ENCODE measurements at regions of chr21 and their contacts with region 1.

Region 1: DNA sequence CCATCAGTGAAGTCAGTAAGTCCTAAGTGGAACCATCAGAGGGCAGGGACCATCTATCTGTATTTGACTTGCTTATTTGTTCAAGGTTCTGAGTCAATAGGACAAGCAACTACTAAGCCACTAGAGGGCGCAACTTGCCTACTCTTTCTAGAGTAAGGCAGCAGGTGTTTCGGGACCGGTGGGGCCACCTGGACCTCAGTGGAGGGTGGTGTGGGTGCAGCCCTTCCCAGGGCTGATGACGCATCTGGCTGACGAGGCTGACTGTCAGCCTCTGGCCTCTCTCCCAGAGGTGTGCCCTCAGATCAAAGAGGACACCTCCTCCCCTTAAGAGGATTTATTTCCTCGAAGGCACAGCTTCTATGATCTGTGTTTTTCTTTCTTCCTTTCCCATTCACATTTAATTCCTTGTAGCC is 6.6 kb downstream of the CBR3 start:
- DNase-seq: peak in 41 of 42 donors; percentile 28 to 94 (median 82)

Region 2: GRCh38 chr21:36209626-36210171 is 68.2 kb after region 1 on chr21:
- intact Hi-C with region 1: loop called (anchors 10 kb)
- DNase-seq: peak in 34 of 42 donors; percentile 16 to 76 (median 55)

Region 3: GRCh38 chr21:36246080-36246631 is 104.6 kb after region 1 on chr21:
- intact Hi-C with region 1: no loop called
- DNase-seq: no peak

Region 4: DNA sequence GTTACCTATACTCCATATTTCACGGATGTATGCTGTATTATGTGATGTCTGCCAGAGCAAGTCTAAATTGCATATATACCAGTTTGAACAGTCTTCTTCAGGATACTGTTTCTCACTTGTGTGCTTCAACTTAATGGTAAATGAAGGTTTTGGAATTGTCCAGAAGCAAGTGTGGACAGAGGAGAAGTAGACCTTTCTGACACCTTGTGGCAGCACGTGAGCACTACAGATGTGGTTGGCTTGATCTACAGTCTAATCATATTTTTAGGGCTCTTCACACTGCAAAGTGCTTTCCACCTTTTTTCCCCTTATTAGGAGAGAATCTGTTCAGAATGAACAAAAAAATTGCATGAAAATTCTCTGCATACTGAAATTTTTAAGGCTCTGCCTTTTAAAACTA is 189.4 kb after region 1 on chr21:
- intact Hi-C with region 1: loop called (anchors 5 kb)
- DNase-seq: peak in 37 of 42 donors; percentile 25 to 82 (median 56)